Common myeloid progenitor, CD34-positive (primary cell): ENCODE measurements at regions of chr22 and their contacts with region 1.

Region 1: DNA sequence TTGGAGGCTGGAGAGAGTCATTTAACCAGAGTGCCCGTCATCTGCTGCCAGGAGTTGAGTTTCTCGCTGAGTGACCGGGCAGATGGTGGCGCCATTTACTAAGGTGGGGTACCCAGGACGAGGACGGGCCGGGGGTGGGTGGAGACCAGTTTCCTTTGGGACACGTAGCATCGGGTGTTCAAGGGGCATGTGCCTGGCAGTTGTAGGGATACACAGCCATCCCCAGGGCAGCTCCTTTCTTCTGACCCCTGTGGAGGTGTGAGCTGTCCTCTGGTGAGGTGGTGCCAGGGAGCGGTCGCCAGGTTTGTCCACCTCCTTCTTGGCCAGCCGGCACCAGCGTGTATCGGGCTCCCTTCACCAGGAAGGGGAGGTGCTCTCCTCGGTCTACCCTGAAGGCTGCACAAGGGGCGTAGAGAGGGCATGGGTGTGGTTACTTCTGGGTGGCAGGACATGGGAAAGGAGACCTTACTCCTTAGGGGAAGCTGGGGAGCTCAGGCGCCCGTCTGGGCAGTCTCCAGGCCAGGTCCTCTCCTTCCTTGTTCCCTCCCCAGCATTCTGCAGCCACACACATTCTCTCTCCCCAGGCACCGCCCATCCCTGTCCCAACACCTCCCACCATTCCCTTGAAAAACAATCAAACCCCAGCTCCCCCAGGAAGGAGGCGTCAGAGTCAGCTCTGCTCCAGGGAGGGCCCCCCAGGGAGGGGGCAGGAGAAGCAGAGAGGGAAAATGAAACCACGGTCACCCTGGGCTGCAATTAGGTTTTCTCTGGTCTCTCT is 10.3 kb upstream of the MB start:
- DNase-seq: peak; percentile 60 to 70 (median 67)
- H3K4me3 ChIP-seq: peak overlapping the region; percentile 38 to 87 (median 72)
- H3K27ac ChIP-seq: no peak overlapping the region
- H3K4me1 ChIP-seq: peaks cover 0 to 19% (median 17%) of the 10 kb centered on the region in 4 experiments
- H3K27me3 ChIP-seq: peaks cover 0 to 12% (median 4%) of the 10 kb centered on the region in 5 experiments

Region 2: GRCh38 chr22:35454416-35455054 is 172.9 kb before region 1 on chr22:
- CTCF ChIA-PET with region 1: no interaction called
- POLR2A ChIA-PET with region 1: no interaction called
- DNase-seq: peak; percentile 29 to 55 (median 49)
- H3K4me3 ChIP-seq: no peak overlapping the region
- H3K27ac ChIP-seq: no peak overlapping the region
- H3K4me1 ChIP-seq: no peaks in the 10 kb centered on the region
- H3K27me3 ChIP-seq: no peaks in the 10 kb centered on the region

Region 3: DNA sequence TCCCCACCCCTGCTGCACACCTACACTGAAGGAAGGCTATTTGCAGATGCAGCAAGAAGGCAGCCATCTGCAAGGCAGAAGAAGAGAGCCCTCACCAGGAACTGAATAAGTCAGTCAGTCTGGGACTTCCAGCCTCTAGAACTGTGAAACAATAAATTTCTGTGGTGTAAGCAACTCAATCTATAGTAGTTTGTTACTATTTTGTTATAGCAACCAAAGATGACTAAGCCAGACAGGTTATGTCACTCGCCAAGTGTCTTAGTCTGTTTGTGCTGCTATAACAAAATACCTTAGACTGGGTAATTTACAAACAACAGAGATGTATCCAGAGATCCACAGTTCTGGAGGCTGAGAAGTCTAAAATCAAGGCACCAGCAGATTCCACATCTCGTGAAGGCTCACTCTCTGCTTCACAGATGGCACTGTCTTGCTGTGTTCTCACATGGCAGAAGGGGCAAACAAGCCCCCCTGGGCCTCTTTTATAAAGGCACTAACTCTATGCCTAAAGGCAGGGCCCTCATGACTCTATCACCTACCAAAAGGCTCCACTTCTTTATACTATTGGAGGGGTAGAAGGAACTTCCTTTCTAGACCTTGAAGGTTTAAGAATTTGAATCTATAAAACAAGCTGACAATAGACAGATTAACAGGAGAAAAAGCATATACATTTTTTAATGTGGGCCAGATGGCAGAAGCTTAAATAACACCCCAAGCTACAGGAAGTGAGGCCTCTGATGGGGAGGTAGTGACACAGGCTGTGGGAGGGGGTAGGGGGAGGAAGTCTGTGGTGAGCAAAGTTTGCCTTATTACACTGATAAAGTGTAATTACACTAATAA is 33.1 kb after region 1 on chr22:
- CTCF ChIA-PET with region 1: interaction called, 10 read pairs
- POLR2A ChIA-PET with region 1: no interaction called
- DNase-seq: peak; percentile 84 to 97 (median 95)
- H3K4me3 ChIP-seq: peak overlapping the region in 3 of 7 experiments; percentile 6 to 28 (median 25)
- H3K27ac ChIP-seq: peak overlapping the region; percentile 97 to 98
- H3K4me1 ChIP-seq: peaks cover 15 to 44% (median 28%) of the 10 kb centered on the region in 4 experiments
- H3K27me3 ChIP-seq: no peaks in the 10 kb centered on the region

Region 4: GRCh38 chr22:35921777-35922176 is 294.3 kb after region 1 on chr22:
- CTCF ChIA-PET with region 1: interaction called, 55 read pairs
- POLR2A ChIA-PET with region 1: no interaction called
- DNase-seq: peak; percentile 74 to 77 (median 77)
- H3K4me3 ChIP-seq: no peak overlapping the region
- H3K27ac ChIP-seq: no peak overlapping the region
- H3K4me1 ChIP-seq: peaks cover 0 to 3% (median 2%) of the 10 kb centered on the region in 4 experiments
- H3K27me3 ChIP-seq: no peaks in the 10 kb centered on the region